ENCODE measurements at regions of chr13 and their contacts with region 1.

Region 1: DNA sequence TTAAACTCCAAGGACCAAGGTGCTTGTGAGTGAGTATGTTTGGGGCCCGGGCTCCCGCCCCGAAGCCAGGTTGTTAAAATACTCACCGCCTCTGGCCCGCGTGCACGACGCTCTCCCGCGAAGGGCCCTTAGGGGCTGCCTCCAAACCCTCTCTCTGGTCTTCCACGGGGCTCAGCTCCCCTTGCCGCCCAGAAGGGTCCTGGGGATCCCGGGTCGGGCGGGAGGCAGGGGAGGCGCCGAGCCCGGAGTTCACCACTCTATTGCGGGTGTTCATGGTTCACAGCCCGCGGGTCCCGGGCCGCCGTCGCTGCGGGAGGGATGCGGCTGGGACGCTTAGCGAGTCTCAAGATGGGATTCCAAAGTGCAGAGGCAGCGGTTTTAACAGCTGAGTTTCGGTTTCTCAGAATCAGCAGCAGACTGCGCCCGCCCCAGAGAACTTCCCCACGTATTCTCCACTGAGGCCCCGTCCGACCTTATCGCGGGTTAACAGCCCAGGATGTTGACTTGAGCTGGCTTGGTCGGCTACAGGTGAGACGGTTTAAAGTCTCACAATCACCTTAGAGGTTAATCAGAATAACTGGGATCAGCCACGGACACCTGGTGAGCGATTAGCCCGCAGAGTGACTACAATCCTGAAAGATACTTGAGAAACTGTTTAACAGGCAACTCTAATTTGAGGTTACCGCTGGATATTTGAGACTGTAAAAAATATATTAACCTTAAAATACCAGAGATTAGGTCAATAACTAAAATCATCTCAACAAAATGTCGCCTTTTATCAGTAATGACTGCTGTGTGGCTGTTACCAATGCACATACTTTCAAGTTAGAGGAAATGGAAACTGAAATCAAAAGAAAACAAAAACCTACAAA is at the start of gene EPSTI1:
- DNase-seq: peak; percentile 59 to 85 (median 72)
- ATAC-seq: peak; percentile 85 to 86 (median 86)
- H3K4me3 ChIP-seq: peak within 1 kb of the TSS; percentile 84 to 89
- H3K4me3 Mint-ChIP-seq: peak within 1 kb of the TSS; percentile 92 to 96 (median 92)
- H3K27ac ChIP-seq: peak within 1 kb of the TSS; percentile 100
- H3K27ac Mint-ChIP-seq: peak within 1 kb of the TSS; percentile 100
- H3K4me1 ChIP-seq: peaks cover 23 to 27% of the 10 kb centered on the region in 2 experiments
- H3K4me1 Mint-ChIP-seq: peaks cover 45 to 71% (median 60%) of the 10 kb centered on the region in 3 donors
- H3K27me3 ChIP-seq: no peaks in the 10 kb centered on the region
- H3K27me3 Mint-ChIP-seq: no peaks in the 10 kb centered on the region
- total RNA-seq, gene EPSTI1: 15.3 to 29.9 (median 28.5) TPM

Region 2: GRCh38 chr13:42836930-42837690 is 155.0 kb before region 1 on chr13:
- CTCF ChIA-PET with region 1: no interaction called
- POLR2A ChIA-PET with region 1: no interaction called
- DNase-seq: no peak
- ATAC-seq: no peak
- H3K4me3 ChIP-seq: no peak overlapping the region
- H3K4me3 Mint-ChIP-seq: no peak overlapping the region
- H3K27ac ChIP-seq: no peak overlapping the region
- H3K27ac Mint-ChIP-seq: no peak overlapping the region
- H3K4me1 ChIP-seq: no peaks in the 10 kb centered on the region
- H3K4me1 Mint-ChIP-seq: no peaks in the 10 kb centered on the region
- H3K27me3 ChIP-seq: no peaks in the 10 kb centered on the region
- H3K27me3 Mint-ChIP-seq: peaks cover 0 to 6% of the 10 kb centered on the region in 2 donors

Region 3: DNA sequence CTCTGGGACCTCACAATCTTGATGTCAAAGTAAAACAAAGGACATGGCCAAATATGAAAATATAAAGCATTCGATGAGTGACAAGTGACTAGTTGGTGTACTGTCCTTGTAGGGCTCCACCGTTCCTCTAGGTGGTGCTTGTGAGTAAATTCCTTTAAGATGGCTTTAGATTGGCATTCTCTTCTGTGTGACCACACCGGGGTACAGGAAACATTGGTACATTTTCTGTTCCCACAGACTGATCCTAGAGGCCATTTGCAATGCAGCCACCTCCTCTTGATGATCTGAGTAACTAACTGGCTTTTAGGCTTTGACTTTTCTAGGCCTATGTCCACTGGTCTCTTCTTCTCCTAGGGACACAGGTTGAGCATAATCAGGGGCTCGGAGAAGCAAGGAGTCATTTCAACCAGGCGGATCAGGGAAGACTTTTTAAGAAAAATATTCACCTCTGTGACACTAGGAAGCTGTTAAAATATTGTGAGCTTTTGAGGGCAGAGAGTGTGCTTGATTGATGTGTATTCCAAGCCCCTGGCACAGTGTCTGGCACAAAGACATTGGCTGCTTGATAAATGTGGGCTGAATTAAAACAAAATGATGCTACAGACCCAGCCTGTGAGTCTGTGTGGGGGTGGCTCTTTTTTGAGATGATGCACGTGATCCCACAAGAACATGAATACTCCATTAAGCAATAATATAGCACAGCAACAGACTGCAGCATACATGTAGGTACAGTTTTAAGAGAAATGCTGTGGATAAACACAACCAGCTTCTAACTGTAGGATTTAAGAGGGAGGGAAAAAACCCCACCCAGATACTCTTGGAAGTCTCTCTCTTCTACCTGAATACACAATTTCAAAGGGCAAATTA is 21.1 kb before region 1 on chr13:
- CTCF ChIA-PET with region 1: interaction called, 9 to 37 read pairs
- POLR2A ChIA-PET with region 1: no interaction called
- DNase-seq: peak in 26 of 35 experiments; percentile 16 to 76 (median 35)
- ATAC-seq: peak; percentile 78 to 82 (median 82)
- H3K4me3 ChIP-seq: no peak overlapping the region
- H3K4me3 Mint-ChIP-seq: no peak overlapping the region
- H3K27ac ChIP-seq: no peak overlapping the region
- H3K27ac Mint-ChIP-seq: peak overlapping the region; percentile 11 to 40
- H3K4me1 ChIP-seq: peaks cover 0 to 5% of the 10 kb centered on the region in 2 experiments
- H3K4me1 Mint-ChIP-seq: peaks cover 22 to 34% (median 26%) of the 10 kb centered on the region in 3 donors
- H3K27me3 ChIP-seq: no peaks in the 10 kb centered on the region
- H3K27me3 Mint-ChIP-seq: no peaks in the 10 kb centered on the region

Region 4: DNA sequence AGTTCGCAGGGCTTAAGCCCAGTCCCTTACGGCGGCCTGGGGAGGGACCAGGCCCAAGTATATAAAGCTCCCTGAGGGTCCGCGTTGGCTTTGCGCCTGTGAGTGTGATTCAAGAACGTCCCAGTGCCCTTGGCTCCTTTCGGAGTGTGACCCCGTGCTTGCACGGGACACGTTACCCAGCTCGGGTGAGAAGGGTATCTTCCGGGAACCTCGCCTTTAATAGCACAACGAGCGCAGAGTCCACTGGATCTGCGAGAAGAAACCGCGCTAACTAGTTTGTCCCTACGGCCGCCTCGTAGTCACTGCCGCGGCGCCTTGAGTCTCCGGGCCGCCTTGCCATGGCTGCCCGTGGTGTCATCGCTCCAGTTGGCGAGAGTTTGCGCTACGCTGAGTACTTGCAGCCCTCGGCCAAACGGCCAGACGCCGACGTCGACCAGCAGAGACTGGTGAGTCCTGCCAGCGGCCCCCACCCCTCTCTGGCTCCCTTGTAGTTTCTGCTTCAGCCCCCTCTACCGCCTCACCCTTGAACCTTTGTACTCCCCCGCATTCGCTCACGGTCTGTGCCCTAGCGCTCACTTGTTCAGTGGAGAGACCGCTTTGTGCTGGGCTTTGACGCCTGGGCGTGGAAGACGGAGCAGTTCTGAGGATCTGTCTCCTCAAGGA is 31.3 kb after region 1 on chr13 and contains the start of gene DNAJC15:
- CTCF ChIA-PET with region 1: interaction called, 4 to 6 read pairs
- POLR2A ChIA-PET with region 1: interaction called, 9 to 17 read pairs
- DNase-seq: peak; percentile 52 to 87 (median 76)
- ATAC-seq: peak; percentile 90 to 95 (median 93)
- H3K4me3 ChIP-seq: peak within 1 kb of the TSS; percentile 80 to 86
- H3K4me3 Mint-ChIP-seq: peak within 1 kb of the TSS; percentile 90 to 99 (median 91)
- H3K27ac ChIP-seq: peak within 1 kb of the TSS; percentile 76
- H3K27ac Mint-ChIP-seq: peak within 1 kb of the TSS; percentile 74 to 99
- H3K4me1 ChIP-seq: peaks cover 0 to 24% of the 10 kb centered on the region in 2 experiments
- H3K4me1 Mint-ChIP-seq: peaks cover 29 to 37% (median 34%) of the 10 kb centered on the region in 3 donors
- H3K27me3 ChIP-seq: no peaks in the 10 kb centered on the region
- H3K27me3 Mint-ChIP-seq: no peaks in the 10 kb centered on the region
- total RNA-seq, gene DNAJC15: 4.4 to 10.8 (median 8.5) TPM

Region 5: DNA sequence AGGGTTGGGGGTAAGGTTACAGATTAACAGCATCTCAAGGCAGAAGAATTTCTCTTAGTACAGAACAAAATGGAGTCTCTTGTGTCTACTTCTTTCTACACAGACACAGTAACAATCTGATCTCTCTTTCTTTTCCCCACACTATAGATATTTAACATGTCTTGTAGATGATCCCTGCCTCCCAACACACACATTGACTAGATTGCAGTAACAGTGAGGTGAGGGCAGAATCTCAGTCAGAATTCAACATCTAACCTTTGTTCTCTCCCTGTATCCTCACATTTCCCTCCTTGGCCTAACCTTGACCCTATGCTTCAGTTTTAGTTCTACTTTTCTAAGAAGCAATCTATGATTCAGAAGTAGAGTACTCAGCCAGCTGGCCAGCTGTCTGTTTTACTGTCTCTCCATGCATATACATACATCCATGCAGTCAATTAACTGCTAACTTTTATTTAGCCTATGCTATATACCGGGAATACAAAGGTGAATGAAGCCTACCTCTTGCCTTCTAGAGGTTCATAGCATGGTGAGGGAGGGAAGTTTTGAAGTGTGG is 49.3 kb after region 1 on chr13:
- CTCF ChIA-PET with region 1: no interaction called
- POLR2A ChIA-PET with region 1: interaction called in 1 of 2 experiments, 14 read pairs
- DNase-seq: no peak
- ATAC-seq: no peak
- H3K4me3 ChIP-seq: no peak overlapping the region
- H3K4me3 Mint-ChIP-seq: no peak overlapping the region
- H3K27ac ChIP-seq: no peak overlapping the region
- H3K27ac Mint-ChIP-seq: peak overlapping the region in 1 of 2 donors; percentile 53
- H3K4me1 ChIP-seq: peaks cover 2 to 10% of the 10 kb centered on the region in 2 experiments
- H3K4me1 Mint-ChIP-seq: peaks cover 49 to 83% (median 71%) of the 10 kb centered on the region in 3 donors
- H3K27me3 ChIP-seq: no peaks in the 10 kb centered on the region
- H3K27me3 Mint-ChIP-seq: no peaks in the 10 kb centered on the region

Region 6: GRCh38 chr13:43054803-43055802 is 63.0 kb after region 1 on chr13:
- CTCF ChIA-PET with region 1: interaction called in 1 of 2 experiments, 6 read pairs
- POLR2A ChIA-PET with region 1: interaction called in 1 of 2 experiments, 12 read pairs
- DNase-seq: peak in 25 of 35 experiments; percentile 2 to 47 (median 22)
- ATAC-seq: peak; percentile 36 to 61 (median 56)
- H3K4me3 ChIP-seq: peak overlapping the region; percentile 63 to 74
- H3K4me3 Mint-ChIP-seq: no peak overlapping the region
- H3K27ac ChIP-seq: peak overlapping the region; percentile 93
- H3K27ac Mint-ChIP-seq: no peak overlapping the region
- H3K4me1 ChIP-seq: peaks cover 26 to 27% of the 10 kb centered on the region in 2 experiments
- H3K4me1 Mint-ChIP-seq: peaks cover 28 to 37% (median 32%) of the 10 kb centered on the region in 3 donors
- H3K27me3 ChIP-seq: no peaks in the 10 kb centered on the region
- H3K27me3 Mint-ChIP-seq: no peaks in the 10 kb centered on the region